Vagina (tissue), 2 donors: ENCODE measurements at regions of chr16 and their contacts with region 1.

Region 1: GRCh38 chr16:50550035-50550434 is 1.8 kb downstream of the NKD1 start:
- DNase-seq: no peak
- H3K4me3 ChIP-seq: peak overlapping the region in 1 of 2 donors; percentile 68
- H3K27ac ChIP-seq: no peak overlapping the region
- H3K4me1 ChIP-seq: peaks cover 24% of the 10 kb centered on the region
- H3K27me3 ChIP-seq: no peaks in the 10 kb centered on the region
- CTCF ChIP-seq: no peak
- POLR2A ChIP-seq: no peak

Region 2: DNA sequence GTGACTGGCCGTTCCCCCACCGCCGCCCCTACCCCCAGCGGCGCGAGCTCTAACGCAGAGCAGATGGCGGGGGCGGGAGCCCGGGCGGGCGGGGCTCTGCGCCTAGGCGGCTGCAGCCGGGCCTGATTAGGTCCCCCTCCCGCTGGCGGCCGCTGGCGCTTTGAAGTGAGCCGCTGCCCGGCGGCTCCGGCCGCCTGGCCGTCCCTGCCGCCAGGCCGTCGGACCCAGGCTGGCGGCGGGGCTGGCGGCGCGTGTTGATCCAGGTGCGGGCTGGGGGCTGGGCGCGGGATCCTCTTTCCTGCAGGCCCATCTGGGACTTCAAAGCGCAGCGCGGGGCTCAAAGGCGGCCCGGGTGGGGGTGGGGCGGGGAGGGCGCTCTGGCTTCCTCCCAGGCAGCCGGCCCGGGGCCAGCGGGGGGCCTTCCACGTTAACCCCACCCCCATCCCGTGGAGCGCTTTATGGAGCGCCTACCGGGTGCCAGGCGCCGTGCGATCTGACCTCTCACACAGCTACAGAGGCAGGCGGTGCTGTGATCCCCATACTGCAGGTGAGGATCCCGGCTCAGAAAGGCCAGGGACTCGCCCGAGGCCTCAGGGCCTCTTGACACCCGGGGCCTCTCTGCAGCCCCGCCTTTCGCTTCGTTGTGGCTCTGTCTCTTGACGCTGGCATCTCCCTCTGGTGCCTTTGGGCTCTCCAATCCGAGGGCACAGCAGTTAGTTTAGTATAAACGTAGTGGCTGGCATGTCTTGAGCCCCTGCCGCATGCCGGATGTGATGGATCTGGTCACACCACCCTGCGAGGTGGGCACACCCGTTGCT is 81.9 kb before region 1 on chr16:
- intact Hi-C with region 1: no loop called
- DNase-seq: no peak
- H3K4me3 ChIP-seq: peak overlapping the region; percentile 34 to 41
- H3K27ac ChIP-seq: no peak overlapping the region
- H3K4me1 ChIP-seq: peaks cover 13% of the 10 kb centered on the region
- H3K27me3 ChIP-seq: no peaks in the 10 kb centered on the region
- CTCF ChIP-seq: no peak
- POLR2A ChIP-seq: no peak

Region 3: GRCh38 chr16:50489182-50489581 is 60.9 kb before region 1 on chr16:
- intact Hi-C with region 1: no loop called
- DNase-seq: peak; percentile 71 to 94
- H3K4me3 ChIP-seq: no peak overlapping the region
- H3K27ac ChIP-seq: no peak overlapping the region
- H3K4me1 ChIP-seq: no peaks in the 10 kb centered on the region
- H3K27me3 ChIP-seq: no peaks in the 10 kb centered on the region
- CTCF ChIP-seq: no peak
- POLR2A ChIP-seq: no peak

Region 4: DNA sequence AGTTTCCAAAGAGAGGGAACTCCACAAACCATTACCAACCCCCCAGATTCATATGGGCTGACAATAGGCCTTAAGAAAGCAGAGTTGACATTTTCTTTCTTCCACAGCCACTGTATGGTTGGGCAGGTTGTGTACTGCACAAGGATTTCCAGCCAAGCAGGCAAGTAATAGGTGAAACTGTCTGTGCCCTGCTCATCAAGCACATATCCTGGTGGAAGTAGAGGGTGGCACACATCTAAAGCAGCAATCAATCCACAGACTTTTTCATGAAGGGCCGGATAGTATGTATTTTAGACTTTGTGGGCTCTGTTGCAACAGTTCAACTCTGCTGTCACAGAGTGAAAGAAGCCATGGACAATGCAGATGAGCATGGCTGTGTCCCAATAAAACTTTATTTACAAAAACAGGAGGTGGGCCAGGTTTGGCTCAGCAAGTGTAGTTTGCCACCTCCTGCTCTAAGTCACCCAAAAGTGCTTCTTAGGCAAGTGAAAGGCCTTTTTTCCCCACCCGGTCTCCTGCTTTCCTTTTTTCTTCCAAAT is 67.7 kb after region 1 on chr16:
- intact Hi-C with region 1: loop called (anchors 2 kb)
- DNase-seq: no peak
- H3K4me3 ChIP-seq: no peak overlapping the region
- H3K27ac ChIP-seq: no peak overlapping the region
- H3K4me1 ChIP-seq: peaks cover 21% of the 10 kb centered on the region
- H3K27me3 ChIP-seq: no peaks in the 10 kb centered on the region
- CTCF ChIP-seq: no peak
- POLR2A ChIP-seq: no peak

Region 5: DNA sequence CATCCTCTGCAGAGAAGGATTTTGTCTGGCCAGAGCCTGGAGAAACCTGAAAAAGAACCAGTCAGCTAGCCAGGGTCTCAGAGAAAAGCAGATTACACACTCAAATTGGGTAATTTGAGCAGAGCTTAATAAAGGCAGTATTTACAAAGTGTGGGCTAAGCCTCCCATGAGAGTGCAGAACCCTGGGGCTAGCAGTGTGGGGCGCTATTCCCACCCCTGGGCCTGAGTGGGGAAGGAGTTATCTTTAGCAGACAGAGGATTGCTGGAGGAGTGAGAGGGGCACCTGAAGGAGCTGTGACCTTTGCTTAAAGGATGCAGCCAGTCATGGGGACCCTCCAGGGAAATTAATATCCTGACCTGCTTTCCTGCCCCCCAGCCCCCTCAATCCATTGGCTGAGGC is 84.9 kb after region 1 on chr16:
- intact Hi-C with region 1: loop called (anchors 5 kb)
- DNase-seq: no peak
- H3K4me3 ChIP-seq: no peak overlapping the region
- H3K27ac ChIP-seq: no peak overlapping the region
- H3K4me1 ChIP-seq: no peaks in the 10 kb centered on the region
- H3K27me3 ChIP-seq: no peaks in the 10 kb centered on the region
- CTCF ChIP-seq: no peak
- POLR2A ChIP-seq: no peak

Region 6: DNA sequence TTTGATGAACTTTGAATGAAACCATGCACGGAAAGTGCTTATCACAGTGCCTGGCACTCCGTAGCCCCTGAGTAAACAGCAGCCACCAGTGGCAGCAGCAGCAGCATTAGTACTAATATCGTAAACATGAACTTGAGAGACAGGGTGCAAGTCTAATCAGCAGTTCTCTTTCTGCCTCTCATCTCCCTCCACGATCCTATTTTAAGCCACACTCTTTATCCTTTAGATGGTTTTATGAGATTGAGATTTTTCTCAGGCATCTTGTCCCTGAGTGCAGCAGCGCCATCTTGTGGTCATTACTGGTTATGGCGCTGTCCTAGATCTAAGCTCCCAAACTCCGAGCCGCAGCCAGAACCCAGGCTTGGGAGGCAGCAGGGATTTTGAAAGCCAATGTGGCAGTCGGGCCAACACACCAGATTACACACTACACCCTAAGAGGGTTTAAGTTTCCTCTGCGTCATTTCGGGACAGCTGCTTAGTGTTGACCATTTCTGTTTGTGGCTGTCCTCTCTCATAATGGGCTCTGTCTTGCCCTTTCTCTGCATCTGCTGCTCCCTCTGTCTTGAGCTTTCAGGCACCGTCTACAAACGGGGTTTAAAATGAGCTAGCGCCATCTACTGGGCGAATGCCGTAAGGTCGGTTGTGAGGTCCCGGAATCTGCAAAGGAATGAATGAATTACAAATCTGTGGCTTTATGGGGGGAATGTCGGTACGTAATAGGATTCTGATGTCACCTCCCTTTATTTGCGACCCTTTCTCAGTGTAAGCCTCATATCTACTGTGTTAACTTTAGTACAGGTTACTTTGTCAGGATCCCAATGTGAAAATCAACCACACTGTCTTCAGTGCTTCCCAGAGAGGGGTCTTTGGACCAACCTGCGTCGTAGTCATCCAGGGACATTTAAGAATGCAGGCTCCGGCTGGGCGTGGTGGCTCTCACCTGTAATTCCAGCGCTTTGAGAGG is 256.3 kb after region 1 on chr16:
- intact Hi-C with region 1: no loop called
- DNase-seq: no peak
- H3K4me3 ChIP-seq: peak overlapping the region; percentile 18 to 35
- H3K27ac ChIP-seq: peak overlapping the region; percentile 52
- H3K4me1 ChIP-seq: peaks cover 12% of the 10 kb centered on the region
- H3K27me3 ChIP-seq: no peaks in the 10 kb centered on the region
- CTCF ChIP-seq: peak; percentile 84 to 92 (median 90)
- POLR2A ChIP-seq: no peak